PC-9 (cell line): ENCODE measurements at regions of chr2 and their contacts with region 1.

Region 1: GRCh38 chr2:8803658-8804379 is 33.6 kb downstream of the KIDINS220 start:
- DNase-seq: peak; percentile 79 to 98
- H3K4me3 ChIP-seq: no peak overlapping the region
- H3K27ac ChIP-seq: peak overlapping the region; percentile 71
- H3K4me1 ChIP-seq: peaks cover 23% of the 10 kb centered on the region
- H3K27me3 ChIP-seq: no peaks in the 10 kb centered on the region
- CTCF ChIP-seq: no peak; the same call in 1 of the 2 replicates

Region 2: DNA sequence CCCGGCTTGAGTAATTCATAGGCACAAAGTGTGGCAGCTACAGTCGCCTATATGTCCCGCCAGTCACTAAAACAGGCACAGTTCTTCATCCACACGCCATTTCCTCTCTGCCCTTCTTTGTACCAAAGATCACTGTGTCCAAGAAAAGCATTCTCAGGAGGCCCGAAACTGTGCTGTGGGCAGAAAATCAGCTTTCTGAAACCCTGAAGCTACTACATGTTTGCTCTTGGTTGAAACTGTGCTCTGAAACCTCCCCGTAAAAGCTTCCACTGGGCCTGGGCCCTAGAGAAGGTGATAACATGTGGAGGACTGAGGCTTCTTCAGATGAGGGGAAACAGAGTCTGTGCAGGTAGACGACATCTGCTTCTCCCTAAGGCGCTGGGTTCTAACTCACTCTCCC is 197.6 kb before region 1 on chr2:
- CTCF ChIA-PET with region 1: no interaction called
- POLR2A ChIA-PET with region 1: no interaction called
- intact Hi-C with region 1: no loop called
- DNase-seq: no peak
- H3K4me3 ChIP-seq: no peak overlapping the region
- H3K27ac ChIP-seq: no peak overlapping the region
- H3K4me1 ChIP-seq: no peaks in the 10 kb centered on the region
- H3K27me3 ChIP-seq: peaks cover 76% of the 10 kb centered on the region
- CTCF ChIP-seq: no peak

Region 3: DNA sequence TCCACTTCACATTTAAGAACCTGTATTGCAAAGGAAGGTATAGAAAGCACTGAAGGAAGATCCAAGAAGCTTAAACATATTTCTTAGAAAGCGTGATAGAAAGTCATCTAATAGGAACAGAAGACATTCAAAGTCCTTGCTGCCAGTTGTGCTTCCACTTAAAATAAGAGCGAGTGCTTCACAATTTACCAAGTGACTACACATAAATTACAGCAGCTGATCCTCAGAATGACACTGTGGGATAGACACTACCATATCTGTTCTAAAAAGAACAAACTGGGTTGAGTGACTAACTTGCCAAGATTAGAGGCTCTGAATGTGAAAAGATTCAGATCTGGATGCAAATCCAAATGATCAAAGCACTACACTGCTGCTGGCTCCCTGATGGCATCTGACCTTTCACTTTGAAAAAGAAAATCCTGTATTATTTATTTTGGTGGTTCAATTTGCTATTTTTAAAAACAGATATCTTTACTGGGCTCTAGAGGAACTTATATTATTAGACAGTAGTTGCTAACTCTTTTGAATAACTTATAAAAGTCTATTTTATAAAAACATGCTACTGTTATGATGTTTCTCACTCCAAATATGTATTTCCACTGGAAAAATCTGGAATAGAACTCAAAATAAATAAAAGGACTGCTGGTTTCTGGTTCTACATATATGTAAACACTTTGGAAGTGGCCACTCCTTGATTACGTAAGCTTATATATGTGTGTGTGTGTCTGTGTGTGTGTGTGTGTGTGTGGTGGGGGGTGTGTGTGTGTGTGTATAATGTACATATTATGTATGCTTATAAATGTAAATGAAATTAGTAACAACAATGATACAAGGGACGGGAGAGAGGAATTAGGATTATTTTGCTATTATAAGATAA is 23.8 kb before region 1 on chr2:
- CTCF ChIA-PET with region 1: no interaction called
- POLR2A ChIA-PET with region 1: no interaction called
- intact Hi-C with region 1: no loop called
- DNase-seq: no peak
- H3K4me3 ChIP-seq: no peak overlapping the region
- H3K27ac ChIP-seq: no peak overlapping the region
- H3K4me1 ChIP-seq: no peaks in the 10 kb centered on the region
- H3K27me3 ChIP-seq: no peaks in the 10 kb centered on the region
- CTCF ChIP-seq: no peak

Region 4: GRCh38 chr2:8836971-8837794 is 33.4 kb after region 1 on chr2 and contains the start of gene KIDINS220:
- CTCF ChIA-PET with region 1: interaction called, 10 read pairs
- POLR2A ChIA-PET with region 1: no interaction called
- intact Hi-C with region 1: no loop called
- DNase-seq: peak; percentile 65 to 77
- H3K4me3 ChIP-seq: peak within 1 kb of the TSS; percentile 94
- H3K27ac ChIP-seq: no peak within 1 kb of the TSS
- H3K4me1 ChIP-seq: peaks cover 13% of the 10 kb centered on the region
- H3K27me3 ChIP-seq: no peaks in the 10 kb centered on the region
- CTCF ChIP-seq: no peak
- total RNA-seq, gene KIDINS220: 11.0 and 13.9 TPM in 2 replicates